GM12878 (cell line): ENCODE measurements at regions of chr3 and their contacts with region 1.

Region 1: GRCh38 chr3:102229062-102229655 is 205.7 kb upstream of the ZPLD1 start:
- DNase-seq: peak; percentile 61
- ATAC-seq: peak; percentile 78
- H3K4me3 ChIP-seq: no peak overlapping the region
- H3K27ac ChIP-seq: no peak overlapping the region
- H3K4me1 ChIP-seq: peaks cover 6% of the 10 kb centered on the region; the same call in 1 of the 2 replicates
- H3K27me3 ChIP-seq: no peaks in the 10 kb centered on the region
- CTCF ChIP-seq: peak; percentile 89 to 93 (median 91)
- EP300 ChIP-seq: no peak
- POLR2A ChIP-seq: no peak
- RAD21 ChIP-seq: peak; percentile 98

Region 2: DNA sequence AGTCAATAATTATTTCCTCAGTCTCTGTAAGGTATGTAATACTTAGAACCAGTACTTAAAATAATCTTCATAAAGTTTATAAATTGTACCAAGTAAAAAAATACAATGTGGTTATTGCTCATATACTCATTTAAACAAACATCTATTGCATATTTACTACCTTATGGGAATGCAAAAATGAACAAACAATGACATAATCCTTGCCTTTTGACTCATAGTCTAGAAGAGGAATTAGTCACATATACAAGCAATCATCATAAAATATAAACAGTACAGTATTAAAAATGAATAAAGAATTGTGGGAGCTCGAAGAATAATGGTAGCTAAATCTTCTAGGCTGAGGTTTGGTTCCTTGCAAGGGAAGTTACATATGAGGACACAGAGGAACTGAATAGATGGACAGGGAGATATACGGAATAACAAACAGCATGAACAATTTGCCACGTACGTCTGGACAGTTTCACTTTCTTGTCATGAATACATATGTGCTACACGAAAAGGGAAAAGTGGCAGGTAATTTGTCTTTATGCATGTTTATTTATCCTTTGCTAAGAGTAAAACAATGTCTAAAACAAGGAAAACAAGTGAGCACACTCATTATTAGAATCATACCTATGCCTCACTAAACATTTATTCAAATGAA is 925.9 kb before region 1 on chr3:
- CTCF ChIA-PET with region 1: no interaction called
- POLR2A ChIA-PET with region 1: no interaction called
- RAD21 ChIA-PET with region 1: no interaction called
- SMC1A ChIA-PET with region 1: no interaction called
- in situ Hi-C with region 1: no loop called
- intact Hi-C with region 1: no loop called
- DNase-seq: no peak
- ATAC-seq: peak; percentile 74
- H3K4me3 ChIP-seq: no peak overlapping the region
- H3K27ac ChIP-seq: no peak overlapping the region
- H3K4me1 ChIP-seq: no peaks in the 10 kb centered on the region
- H3K27me3 ChIP-seq: no peaks in the 10 kb centered on the region
- CTCF ChIP-seq: no peak
- EP300 ChIP-seq: peak; percentile 11 to 33; a peak in 1 of 4 replicates
- POLR2A ChIP-seq: no peak
- RAD21 ChIP-seq: no peak

Region 3: DNA sequence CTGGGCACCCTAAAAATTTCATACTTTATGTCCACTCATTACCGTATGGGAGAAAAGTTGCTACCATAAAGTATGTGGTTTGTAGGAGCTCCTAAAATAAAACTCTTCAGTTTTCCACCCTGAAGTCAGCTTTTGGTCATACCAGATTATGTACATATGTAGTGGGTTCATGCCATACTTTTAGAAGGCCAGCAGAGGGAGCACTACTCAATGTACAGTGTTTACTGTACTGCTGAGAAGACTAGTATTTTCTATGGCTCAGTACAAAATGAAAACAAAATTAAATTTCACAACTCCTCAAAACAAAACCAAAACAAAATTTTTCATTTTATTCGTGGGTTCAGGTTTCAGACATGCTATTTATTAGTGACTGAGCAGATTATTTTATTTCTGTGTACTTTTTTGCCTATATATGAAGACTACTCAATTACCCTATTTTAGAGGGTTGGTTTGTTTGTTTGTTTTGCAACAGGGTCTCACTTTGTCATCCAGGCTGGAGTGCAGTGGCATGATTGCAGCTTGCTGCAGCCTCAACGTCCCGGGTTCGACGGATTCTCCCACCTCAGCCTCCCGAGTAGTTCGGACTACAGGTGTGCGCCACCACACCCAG is 425.9 kb before region 1 on chr3:
- CTCF ChIA-PET with region 1: interaction called, 1,057 read pairs
- POLR2A ChIA-PET with region 1: interaction called, 7 read pairs
- RAD21 ChIA-PET with region 1: interaction called, 659 read pairs
- SMC1A ChIA-PET with region 1: interaction called, 949 read pairs
- in situ Hi-C with region 1: no loop called
- intact Hi-C with region 1: no loop called
- DNase-seq: no peak
- ATAC-seq: peak; percentile 100
- H3K4me3 ChIP-seq: no peak overlapping the region
- H3K27ac ChIP-seq: no peak overlapping the region
- H3K4me1 ChIP-seq: peaks cover 11% of the 10 kb centered on the region
- H3K27me3 ChIP-seq: no peaks in the 10 kb centered on the region
- CTCF ChIP-seq: peak; percentile 78 to 88 (median 85)
- EP300 ChIP-seq: no peak
- POLR2A ChIP-seq: no peak
- RAD21 ChIP-seq: peak; percentile 70

Region 4: GRCh38 chr3:101849051-101849720 is 380.0 kb before region 1 on chr3 and contains the start of gene NFKBIZ:
- CTCF ChIA-PET with region 1: interaction called, 22 read pairs
- POLR2A ChIA-PET with region 1: interaction called, 3 read pairs
- RAD21 ChIA-PET with region 1: interaction called, 26 read pairs
- SMC1A ChIA-PET with region 1: interaction called, 24 read pairs
- in situ Hi-C with region 1: no loop called
- intact Hi-C with region 1: loop called (anchors 1 kb)
- DNase-seq: no peak
- ATAC-seq: peak; percentile 78
- H3K4me3 ChIP-seq: peak within 1 kb of the TSS; percentile 75
- H3K27ac ChIP-seq: peak within 1 kb of the TSS; percentile 93
- H3K4me1 ChIP-seq: peaks cover 16% of the 10 kb centered on the region
- H3K27me3 ChIP-seq: no peaks in the 10 kb centered on the region
- CTCF ChIP-seq: no peak
- EP300 ChIP-seq: no peak
- POLR2A ChIP-seq: peak; percentile 95
- RAD21 ChIP-seq: no peak
- polyA plus RNA-seq, gene NFKBIZ: 6.3 to 8.9 TPM

Region 5: GRCh38 chr3:101988591-101988990 is 240.6 kb before region 1 on chr3:
- CTCF ChIA-PET with region 1: interaction called, 10 read pairs
- POLR2A ChIA-PET with region 1: interaction called, 3 read pairs
- RAD21 ChIA-PET with region 1: interaction called, 6 read pairs
- SMC1A ChIA-PET with region 1: interaction called, 6 read pairs
- in situ Hi-C with region 1: no loop called
- intact Hi-C with region 1: loop called (anchors 2 kb)
- DNase-seq: no peak
- ATAC-seq: peak; percentile 65
- H3K4me3 ChIP-seq: no peak overlapping the region
- H3K27ac ChIP-seq: peak overlapping the region; percentile 59
- H3K4me1 ChIP-seq: peaks cover 28% of the 10 kb centered on the region
- H3K27me3 ChIP-seq: no peaks in the 10 kb centered on the region
- CTCF ChIP-seq: no peak
- EP300 ChIP-seq: 0 out of 4 replicates have a peak, but pooled peaks of 1 of the 2 experiments have one; percentile 30
- POLR2A ChIP-seq: no peak
- RAD21 ChIP-seq: no peak

Region 6: GRCh38 chr3:102113411-102114041 is 115.6 kb before region 1 on chr3:
- CTCF ChIA-PET with region 1: interaction called, 11 read pairs
- POLR2A ChIA-PET with region 1: no interaction called
- RAD21 ChIA-PET with region 1: interaction called, 4 read pairs
- SMC1A ChIA-PET with region 1: interaction called, 6 read pairs
- in situ Hi-C with region 1: no loop called
- intact Hi-C with region 1: no loop called
- DNase-seq: no peak
- ATAC-seq: no peak
- H3K4me3 ChIP-seq: no peak overlapping the region
- H3K27ac ChIP-seq: no peak overlapping the region
- H3K4me1 ChIP-seq: no peaks in the 10 kb centered on the region
- H3K27me3 ChIP-seq: no peaks in the 10 kb centered on the region
- CTCF ChIP-seq: no peak
- EP300 ChIP-seq: no peak
- POLR2A ChIP-seq: no peak
- RAD21 ChIP-seq: no peak

Region 7: GRCh38 chr3:102544741-102545140 is 315.6 kb after region 1 on chr3:
- CTCF ChIA-PET with region 1: interaction called, 314 read pairs
- POLR2A ChIA-PET with region 1: no interaction called
- RAD21 ChIA-PET with region 1: interaction called, 177 read pairs
- SMC1A ChIA-PET with region 1: interaction called, 158 read pairs
- in situ Hi-C with region 1: loop called (anchors 5 kb)
- intact Hi-C with region 1: no loop called
- DNase-seq: no peak
- ATAC-seq: no peak
- H3K4me3 ChIP-seq: no peak overlapping the region
- H3K27ac ChIP-seq: no peak overlapping the region
- H3K4me1 ChIP-seq: no peaks in the 10 kb centered on the region
- H3K27me3 ChIP-seq: peaks cover 0 to 4% of the 10 kb centered on the region in 2 experiments; a peak in 1 of 4 replicates
- CTCF ChIP-seq: no peak
- EP300 ChIP-seq: no peak
- POLR2A ChIP-seq: no peak
- RAD21 ChIP-seq: no peak